Psoas muscle (tissue), 8 donors: ENCODE measurements at regions of chr11 and their contacts with region 1.

Region 1: GRCh38 chr11:35260342-35260985 is 121.5 kb downstream of the CD44 start:
- DNase-seq: no peak
- ATAC-seq: no peak
- H3K4me3 ChIP-seq: no peak overlapping the region
- H3K27ac ChIP-seq: no peak overlapping the region
- H3K4me1 ChIP-seq: no peaks in the 10 kb centered on the region
- H3K27me3 ChIP-seq: peaks cover 0 to 3% (median 0%) of the 10 kb centered on the region in 3 donors
- CTCF ChIP-seq: no peak

Region 2: GRCh38 chr11:35376613-35377012 is 116.1 kb after region 1 on chr11:
- intact Hi-C with region 1: no loop called
- DNase-seq: no peak
- ATAC-seq: no peak
- H3K4me3 ChIP-seq: no peak overlapping the region
- H3K27ac ChIP-seq: no peak overlapping the region
- H3K4me1 ChIP-seq: no peaks in the 10 kb centered on the region
- H3K27me3 ChIP-seq: no peaks in the 10 kb centered on the region
- CTCF ChIP-seq: no peak

Region 3: DNA sequence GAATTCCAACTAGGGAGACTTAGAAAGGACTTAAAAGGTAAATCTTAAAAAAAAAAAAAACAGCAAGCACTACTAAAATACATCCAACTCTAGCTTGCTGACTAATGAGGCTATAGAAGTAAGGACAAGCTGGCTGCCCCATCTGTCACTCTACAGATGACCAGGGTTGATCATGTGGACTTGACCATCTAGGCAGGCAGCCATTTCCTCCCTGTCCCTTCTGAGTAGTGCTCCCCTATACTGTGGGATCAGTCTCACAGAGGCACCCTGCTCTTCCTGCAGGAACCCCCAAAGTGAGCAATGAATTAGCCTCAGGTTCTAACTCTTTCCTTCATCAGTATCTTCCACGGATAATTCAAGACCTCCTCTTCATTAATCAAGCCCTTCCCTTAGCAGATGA is 146.6 kb after region 1 on chr11:
- intact Hi-C with region 1: loop called in 1 of 2 experiments (anchors 5 kb)
- DNase-seq: no peak
- ATAC-seq: no peak
- H3K4me3 ChIP-seq: no peak overlapping the region
- H3K27ac ChIP-seq: no peak overlapping the region
- H3K4me1 ChIP-seq: no peaks in the 10 kb centered on the region
- H3K27me3 ChIP-seq: no peaks in the 10 kb centered on the region
- CTCF ChIP-seq: no peak